Panc1 (cell line): ENCODE measurements at regions of chr15 and their contacts with region 1.

Region 1: GRCh38 chr15:100940767-100941379 is 21.7 kb downstream of the LRRK1 start:
- DNase-seq: no peak
- ATAC-seq: 0 out of 2 replicates have a peak, but pooled peaks have one; percentile 18
- H3K4me3 ChIP-seq: no peak overlapping the region
- H3K27ac ChIP-seq: peak overlapping the region; percentile 86
- H3K4me1 ChIP-seq: peaks cover 47% of the 10 kb centered on the region
- H3K27me3 ChIP-seq: no peaks in the 10 kb centered on the region
- CTCF ChIP-seq: no peak

Region 2: DNA sequence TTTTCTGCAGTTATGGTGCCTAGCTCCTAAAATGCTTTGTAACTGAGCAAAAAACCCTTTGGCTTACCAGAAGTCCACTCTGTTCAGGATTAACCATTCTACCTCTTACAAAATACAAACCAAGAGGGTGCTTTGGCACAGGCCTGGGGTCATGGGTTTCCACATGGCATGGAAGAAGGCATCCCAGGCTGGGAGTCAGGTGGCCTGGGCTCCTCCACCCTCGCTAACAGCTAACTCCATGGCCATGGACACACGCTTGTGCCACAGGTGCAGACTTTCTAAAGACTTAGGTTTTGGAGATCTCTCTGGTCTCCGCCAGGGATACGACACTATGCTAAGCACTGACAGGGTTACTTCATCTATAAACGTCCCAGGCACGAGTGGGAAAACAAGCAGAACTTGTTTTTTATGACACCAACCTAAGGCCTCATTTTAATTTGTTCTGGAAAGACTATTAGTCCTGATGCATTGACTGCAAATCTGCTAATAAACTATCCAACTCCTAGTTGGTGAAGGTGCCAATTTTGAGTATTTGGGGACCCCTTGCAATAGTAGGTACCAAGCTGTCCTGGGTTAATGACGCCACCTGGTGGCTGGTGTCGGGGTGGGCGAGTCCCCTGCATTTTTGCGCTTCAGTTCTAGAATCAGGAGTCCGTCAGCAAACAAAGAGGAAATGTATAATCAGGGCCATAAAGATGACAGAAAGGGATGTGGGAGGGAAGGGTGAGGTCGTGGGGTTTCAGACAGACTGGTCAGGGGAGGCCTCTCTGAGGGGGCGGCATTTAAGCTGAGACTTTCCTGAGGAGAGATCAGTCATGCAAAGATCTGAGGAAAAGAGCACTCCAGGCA is 71.5 kb before region 1 on chr15:
- CTCF ChIA-PET with region 1: no interaction called
- POLR2A ChIA-PET with region 1: no interaction called
- in situ Hi-C with region 1: no loop called
- intact Hi-C with region 1: no loop called
- DNase-seq: no peak
- ATAC-seq: no peak
- H3K4me3 ChIP-seq: no peak overlapping the region
- H3K27ac ChIP-seq: no peak overlapping the region
- H3K4me1 ChIP-seq: 0 out of 2 replicates have a peak, but pooled peaks cover 2% of the 10 kb centered on the region
- H3K27me3 ChIP-seq: no peaks in the 10 kb centered on the region
- CTCF ChIP-seq: peak; percentile 22

Region 3: DNA sequence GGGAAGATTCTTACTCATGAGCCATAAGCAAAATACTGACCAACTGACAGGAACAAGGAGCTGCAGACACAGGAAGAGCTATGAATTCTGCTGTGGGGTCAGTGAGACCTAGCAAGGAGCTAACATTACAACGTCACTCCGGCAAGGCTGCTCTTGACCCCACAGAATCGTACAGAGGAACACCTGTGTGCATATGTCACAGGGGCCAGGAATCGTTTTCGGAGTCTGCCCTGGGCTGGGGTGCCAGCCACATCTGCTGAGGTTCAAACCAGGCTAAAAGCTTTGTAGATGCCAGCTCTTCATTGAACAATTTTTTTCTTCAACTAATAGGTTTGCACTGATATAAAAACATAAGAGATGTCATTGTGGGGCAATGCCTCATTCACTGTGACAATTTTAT is 60.9 kb after region 1 on chr15:
- CTCF ChIA-PET with region 1: interaction called, 15 read pairs
- POLR2A ChIA-PET with region 1: interaction called, 10 read pairs
- in situ Hi-C with region 1: no loop called
- intact Hi-C with region 1: no loop called
- DNase-seq: no peak
- ATAC-seq: no peak
- H3K4me3 ChIP-seq: no peak overlapping the region
- H3K27ac ChIP-seq: peak overlapping the region; percentile 87
- H3K4me1 ChIP-seq: peaks cover 41% of the 10 kb centered on the region
- H3K27me3 ChIP-seq: no peaks in the 10 kb centered on the region
- CTCF ChIP-seq: no peak